ENCODE measurements at regions of chr14 and their contacts with region 1.

Region 1: GRCh38 chr14:104768437-104769323 is 15.7 kb downstream of the SIVA1 start:
- DNase-seq: peak; percentile 78 to 99 (median 92)
- ATAC-seq: peak; percentile 80 to 96 (median 92)
- H3K4me3 ChIP-seq: no peak overlapping the region
- H3K27ac ChIP-seq: no peak overlapping the region
- H3K4me1 ChIP-seq: peaks cover 0 to 7% (median 5%) of the 10 kb centered on the region in 3 donors
- H3K27me3 ChIP-seq: no peaks in the 10 kb centered on the region
- CTCF ChIP-seq: peak; percentile 92 to 95 (median 93)

Region 2: GRCh38 chr14:104820669-104821228 is 52.1 kb after region 1 on chr14:
- intact Hi-C with region 1: loop called in 2 of 3 experiments (anchors 2 to 5 kb)
- DNase-seq: peak in 5 of 6 donors; percentile 38 to 82 (median 49)
- ATAC-seq: peak in 3 of 4 donors; percentile 13 to 55 (median 33)
- H3K4me3 ChIP-seq: no peak overlapping the region
- H3K27ac ChIP-seq: no peak overlapping the region
- H3K4me1 ChIP-seq: peaks cover 0 to 6% (median 6%) of the 10 kb centered on the region in 3 donors
- H3K27me3 ChIP-seq: no peaks in the 10 kb centered on the region
- CTCF ChIP-seq: peak in 2 of 4 donors; percentile 19 to 21

Region 3: GRCh38 chr14:105660829-105661531 is 892.3 kb after region 1 on chr14:
- intact Hi-C with region 1: no loop called
- DNase-seq: peak in 1 of 6 donors; percentile 48
- ATAC-seq: no peak
- H3K4me3 ChIP-seq: no peak overlapping the region
- H3K27ac ChIP-seq: no peak overlapping the region
- H3K4me1 ChIP-seq: no peaks in the 10 kb centered on the region
- H3K27me3 ChIP-seq: no peaks in the 10 kb centered on the region
- CTCF ChIP-seq: no peak

Measured in pancreas (tissue), 10 donors.